CD8-positive, alpha-beta T cell (primary cell): ENCODE measurements at regions of chr15 and their contacts with region 1.

Region 1: GRCh38 chr15:31365655-31366127 is 39.1 kb downstream of the KLF13 start:
- DNase-seq: peak; percentile 59 to 92 (median 84)
- ATAC-seq: peak; percentile 47
- H3K4me3 ChIP-seq: peak overlapping the region; percentile 32 to 59
- H3K4me3 Mint-ChIP-seq: peak overlapping the region; percentile 81
- H3K27ac ChIP-seq: peak overlapping the region; percentile 68 to 93
- H3K27ac Mint-ChIP-seq: peak overlapping the region; percentile 97
- H3K4me1 ChIP-seq: peaks cover 97% of the 10 kb centered on the region
- H3K4me1 Mint-ChIP-seq: peaks cover 96% of the 10 kb centered on the region
- H3K27me3 ChIP-seq: no peaks in the 10 kb centered on the region
- H3K27me3 Mint-ChIP-seq: no peaks in the 10 kb centered on the region
- CTCF ChIP-seq: peak; percentile 57

Region 2: DNA sequence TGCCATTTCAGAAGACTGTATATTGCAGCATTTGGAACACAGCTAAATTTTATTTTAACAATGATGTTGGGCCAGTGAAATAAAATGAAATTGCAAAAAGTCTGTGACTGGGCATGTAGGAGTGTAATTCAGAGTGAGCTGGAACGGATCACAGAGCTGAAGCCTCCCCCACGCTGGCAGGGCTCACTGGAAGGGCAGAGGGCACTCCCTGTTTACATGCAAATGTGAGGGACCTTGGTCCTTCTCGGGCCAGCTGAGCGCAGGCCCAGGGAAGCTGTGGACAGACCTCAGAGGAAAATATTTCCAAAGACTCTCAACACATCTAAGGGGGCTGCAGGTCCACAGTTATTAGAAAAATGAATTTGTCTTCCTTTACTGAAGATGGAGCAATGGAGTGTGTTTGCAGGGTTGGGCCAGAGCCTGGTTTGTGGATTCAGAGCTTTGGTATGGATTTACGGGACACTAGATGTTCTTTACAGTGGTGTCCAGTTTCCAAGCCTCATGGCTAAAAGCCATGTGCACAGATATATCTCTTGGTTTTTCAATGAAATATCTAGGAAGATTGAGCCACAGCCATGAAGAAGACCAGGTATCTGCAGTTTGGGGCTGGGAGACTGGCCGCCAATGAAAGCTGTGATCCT is 296.2 kb before region 1 on chr15:
- CTCF ChIA-PET with region 1: no interaction called
- POLR2A ChIA-PET with region 1: no interaction called
- intact Hi-C with region 1: no loop called
- DNase-seq: no peak
- ATAC-seq: no peak
- H3K4me3 ChIP-seq: no peak overlapping the region
- H3K4me3 Mint-ChIP-seq: no peak overlapping the region
- H3K27ac ChIP-seq: no peak overlapping the region
- H3K27ac Mint-ChIP-seq: no peak overlapping the region
- H3K4me1 ChIP-seq: no peaks in the 10 kb centered on the region
- H3K4me1 Mint-ChIP-seq: no peaks in the 10 kb centered on the region
- H3K27me3 ChIP-seq: no peaks in the 10 kb centered on the region
- H3K27me3 Mint-ChIP-seq: no peaks in the 10 kb centered on the region
- CTCF ChIP-seq: no peak

Region 3: GRCh38 chr15:31265871-31266711 is 99.6 kb before region 1 on chr15:
- CTCF ChIA-PET with region 1: interaction called, 4 read pairs
- POLR2A ChIA-PET with region 1: interaction called, 12 read pairs
- intact Hi-C with region 1: no loop called
- DNase-seq: peak; percentile 51 to 90 (median 77)
- ATAC-seq: peak; percentile 81
- H3K4me3 ChIP-seq: peak overlapping the region in 1 of 2 experiments; percentile 42
- H3K4me3 Mint-ChIP-seq: peak overlapping the region; percentile 71
- H3K27ac ChIP-seq: peak overlapping the region; percentile 71 to 72
- H3K27ac Mint-ChIP-seq: peak overlapping the region; percentile 95
- H3K4me1 ChIP-seq: peaks cover 69% of the 10 kb centered on the region
- H3K4me1 Mint-ChIP-seq: peaks cover 96% of the 10 kb centered on the region
- H3K27me3 ChIP-seq: no peaks in the 10 kb centered on the region
- H3K27me3 Mint-ChIP-seq: no peaks in the 10 kb centered on the region
- CTCF ChIP-seq: no peak

Region 4: GRCh38 chr15:31344823-31345605 is 20.7 kb before region 1 on chr15:
- CTCF ChIA-PET with region 1: interaction called, 286 read pairs
- POLR2A ChIA-PET with region 1: interaction called, 296 read pairs
- intact Hi-C with region 1: loop called (anchors 1 kb)
- DNase-seq: peak in 1 of 9 experiments; percentile 68
- ATAC-seq: no peak
- H3K4me3 ChIP-seq: peak overlapping the region; percentile 55 to 72
- H3K4me3 Mint-ChIP-seq: peak overlapping the region; percentile 91
- H3K27ac ChIP-seq: peak overlapping the region; percentile 70 to 78
- H3K27ac Mint-ChIP-seq: peak overlapping the region; percentile 97
- H3K4me1 ChIP-seq: peaks cover 99% of the 10 kb centered on the region
- H3K4me1 Mint-ChIP-seq: peaks cover 98% of the 10 kb centered on the region
- H3K27me3 ChIP-seq: no peaks in the 10 kb centered on the region
- H3K27me3 Mint-ChIP-seq: no peaks in the 10 kb centered on the region
- CTCF ChIP-seq: no peak

Region 5: DNA sequence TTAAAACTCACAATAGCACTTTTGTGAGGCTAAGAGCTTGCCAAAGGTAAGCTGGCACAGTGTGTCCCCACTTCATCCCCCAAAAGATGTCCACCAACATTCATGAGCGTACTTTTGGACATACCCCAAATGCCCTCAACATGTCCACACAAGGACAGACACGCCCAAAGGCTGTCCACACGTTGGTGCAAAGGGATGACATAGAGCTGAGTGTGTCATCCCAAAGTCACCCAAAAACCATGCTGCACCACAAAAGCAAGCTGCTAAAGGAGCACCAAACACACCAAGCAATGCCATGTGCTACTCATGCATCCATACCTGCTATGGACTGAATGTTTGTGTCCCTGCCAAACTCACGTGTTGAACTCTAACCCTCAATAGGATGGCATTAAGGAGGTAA is 18.9 kb after region 1 on chr15:
- CTCF ChIA-PET with region 1: interaction called, 7 read pairs
- POLR2A ChIA-PET with region 1: interaction called, 11 read pairs
- intact Hi-C with region 1: loop called in 1 of 2 experiments (anchors 2 kb)
- DNase-seq: no peak
- ATAC-seq: no peak
- H3K4me3 ChIP-seq: no peak overlapping the region
- H3K4me3 Mint-ChIP-seq: no peak overlapping the region
- H3K27ac ChIP-seq: peak overlapping the region in 1 of 2 experiments; percentile 36
- H3K27ac Mint-ChIP-seq: peak overlapping the region; percentile 22
- H3K4me1 ChIP-seq: peaks cover 47% of the 10 kb centered on the region
- H3K4me1 Mint-ChIP-seq: peaks cover 67% of the 10 kb centered on the region
- H3K27me3 ChIP-seq: no peaks in the 10 kb centered on the region
- H3K27me3 Mint-ChIP-seq: no peaks in the 10 kb centered on the region
- CTCF ChIP-seq: no peak

Region 6: DNA sequence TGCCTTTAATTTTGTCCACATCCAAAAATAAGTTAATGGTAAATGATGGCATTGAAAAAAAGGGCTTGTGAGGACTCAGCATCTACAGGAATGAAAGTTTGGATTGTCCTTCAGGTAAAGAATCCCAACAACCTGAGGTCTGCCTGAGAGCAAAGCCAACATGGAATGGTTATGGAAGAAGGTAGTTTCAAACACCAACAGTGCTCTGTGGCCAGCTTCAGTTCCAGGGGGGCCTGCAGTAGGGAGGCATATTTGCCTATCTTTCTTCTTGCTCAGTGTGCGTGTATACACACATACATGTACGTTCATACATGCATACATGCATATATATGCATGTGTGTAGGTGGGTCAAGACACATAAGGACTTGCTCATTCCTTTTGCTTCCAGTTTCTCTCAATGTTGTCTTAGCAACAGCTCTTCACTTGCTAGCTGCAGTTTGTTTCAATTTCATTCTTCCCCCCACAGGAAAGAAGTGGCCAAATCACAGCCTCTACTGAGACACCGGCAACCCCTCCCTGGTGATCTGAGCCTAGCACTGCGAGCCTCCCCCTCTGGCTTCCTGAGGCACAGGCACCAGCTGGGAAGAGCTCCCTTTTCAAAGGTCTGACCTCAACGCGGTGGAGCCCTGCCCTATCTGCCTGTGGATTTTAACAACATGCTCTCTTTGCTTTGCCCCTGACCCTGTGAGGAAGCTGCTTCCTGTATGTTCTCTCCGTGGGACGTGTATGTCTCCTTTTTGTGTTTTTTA is 107.1 kb after region 1 on chr15:
- CTCF ChIA-PET with region 1: interaction called, 21 read pairs
- POLR2A ChIA-PET with region 1: interaction called, 7 read pairs
- intact Hi-C with region 1: no loop called
- DNase-seq: peak in 8 of 9 experiments; percentile 26 to 82 (median 57)
- ATAC-seq: peak; percentile 84
- H3K4me3 ChIP-seq: peak overlapping the region; percentile 24 to 28
- H3K4me3 Mint-ChIP-seq: peak overlapping the region; percentile 79
- H3K27ac ChIP-seq: peak overlapping the region; percentile 52 to 78
- H3K27ac Mint-ChIP-seq: peak overlapping the region; percentile 96
- H3K4me1 ChIP-seq: peaks cover 39% of the 10 kb centered on the region
- H3K4me1 Mint-ChIP-seq: peaks cover 59% of the 10 kb centered on the region
- H3K27me3 ChIP-seq: no peaks in the 10 kb centered on the region
- H3K27me3 Mint-ChIP-seq: no peaks in the 10 kb centered on the region
- CTCF ChIP-seq: no peak